ENCODE measurements at regions of chr22 and their contacts with region 1.

Region 1: DNA sequence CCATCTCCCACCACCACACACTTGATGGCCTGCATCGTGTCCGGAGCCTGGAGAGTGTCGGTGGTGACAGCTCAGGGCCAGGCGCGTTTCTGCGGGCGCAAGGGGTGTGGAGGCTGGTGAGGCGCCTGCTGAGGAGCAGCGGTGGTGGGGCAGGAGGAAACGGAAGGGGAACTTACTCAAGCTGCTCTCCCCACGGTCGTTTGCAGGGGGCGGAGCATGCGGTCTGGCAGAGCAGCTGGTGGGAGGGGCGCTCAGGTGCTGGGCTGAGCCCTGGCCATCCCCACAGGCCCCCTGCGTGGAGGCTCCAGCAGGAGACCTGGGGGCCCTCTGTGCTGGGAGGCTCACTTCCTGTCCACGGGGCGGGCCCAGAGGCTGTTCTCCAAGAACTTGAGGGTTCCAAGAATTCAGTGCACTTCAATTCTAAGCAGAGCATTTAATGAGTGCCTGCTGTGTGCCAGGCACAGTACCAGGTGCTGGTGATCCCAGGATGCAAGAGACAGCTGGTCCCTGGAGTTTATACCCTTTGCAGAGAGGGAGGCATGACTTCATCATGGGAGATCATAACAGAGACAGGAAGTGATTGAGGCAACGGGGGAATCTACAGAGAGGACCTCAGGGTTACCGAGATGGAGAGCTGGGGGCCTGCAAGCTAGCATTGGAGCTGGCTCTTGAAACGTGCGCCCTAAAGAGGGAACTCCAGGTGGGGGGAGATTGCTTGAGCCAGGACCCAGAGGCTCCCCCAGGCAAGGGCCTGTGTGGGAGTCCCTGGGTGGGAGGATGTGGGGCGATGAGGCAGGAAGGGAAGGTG is at the start of gene RAC2:
- DNase-seq: peak; percentile 83
- H3K4me3 Mint-ChIP-seq: peak within 1 kb of the TSS; percentile 99
- H3K27ac Mint-ChIP-seq: peak within 1 kb of the TSS; percentile 99
- H3K4me1 Mint-ChIP-seq: peaks cover 46% of the 10 kb centered on the region
- H3K27me3 Mint-ChIP-seq: no peaks in the 10 kb centered on the region
- total RNA-seq, gene RAC2: 592 and 614 TPM in 2 replicates

Region 2: GRCh38 chr22:36977947-36978660 is 266.2 kb before region 1 on chr22:
- intact Hi-C with region 1: loop called (anchors 1 kb)
- DNase-seq: peak; percentile 84
- H3K4me3 Mint-ChIP-seq: peak overlapping the region; percentile 86
- H3K27ac Mint-ChIP-seq: peak overlapping the region; percentile 74
- H3K4me1 Mint-ChIP-seq: peaks cover 15% of the 10 kb centered on the region
- H3K27me3 Mint-ChIP-seq: peaks cover 8% of the 10 kb centered on the region

Region 3: DNA sequence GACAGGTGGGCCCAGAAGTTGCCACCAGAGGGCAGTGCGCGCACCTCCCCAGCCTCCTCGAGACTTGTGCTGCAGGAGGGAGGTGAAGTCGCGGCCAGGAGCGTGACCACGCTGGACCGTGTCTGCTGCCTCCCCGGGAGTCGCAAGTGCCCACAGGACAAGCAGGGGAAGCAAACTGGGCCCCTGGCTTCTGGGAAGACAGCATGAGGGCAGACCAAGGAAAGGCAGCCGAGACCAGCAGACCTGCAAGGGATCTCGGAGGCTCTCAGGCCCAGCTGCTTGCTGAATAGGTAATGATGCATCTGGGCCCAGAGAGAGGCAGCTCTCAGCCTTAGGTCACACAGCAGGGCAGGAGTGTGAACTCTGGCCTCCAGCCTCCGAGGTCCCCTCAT is 77.6 kb before region 1 on chr22:
- intact Hi-C with region 1: loop called (anchors 1 kb)
- DNase-seq: peak; percentile 72
- H3K4me3 Mint-ChIP-seq: peak overlapping the region; percentile 75
- H3K27ac Mint-ChIP-seq: peak overlapping the region; percentile 69
- H3K4me1 Mint-ChIP-seq: peaks cover 78% of the 10 kb centered on the region
- H3K27me3 Mint-ChIP-seq: peaks cover 4% of the 10 kb centered on the region

Region 4: GRCh38 chr22:37218771-37219411 is 25.4 kb before region 1 on chr22:
- intact Hi-C with region 1: loop called (anchors 1 kb)
- DNase-seq: peak; percentile 72
- H3K4me3 Mint-ChIP-seq: peak overlapping the region; percentile 79
- H3K27ac Mint-ChIP-seq: peak overlapping the region; percentile 96
- H3K4me1 Mint-ChIP-seq: peaks cover 68% of the 10 kb centered on the region
- H3K27me3 Mint-ChIP-seq: no peaks in the 10 kb centered on the region

Region 5: DNA sequence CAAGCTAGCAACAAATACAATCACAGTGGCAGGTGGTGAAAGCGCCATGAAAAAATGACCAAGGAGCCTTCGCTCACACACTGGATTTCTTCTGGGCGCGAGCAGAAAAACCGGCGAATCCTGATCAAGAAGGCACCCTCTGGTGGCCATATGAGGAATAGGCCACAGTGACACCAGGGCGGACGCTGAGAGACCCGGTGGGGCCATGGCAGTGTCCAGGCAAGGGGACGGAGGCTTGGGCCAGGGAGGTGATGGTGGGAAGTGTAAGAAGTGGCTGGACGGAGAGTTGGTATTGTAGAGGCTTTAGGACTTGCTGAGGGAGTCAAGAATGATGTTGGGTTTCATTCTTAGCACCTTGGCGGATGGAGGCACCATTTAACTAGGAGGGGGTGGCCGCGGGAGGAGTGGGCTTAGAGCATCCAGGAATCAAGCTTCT is 16.6 kb after region 1 on chr22:
- intact Hi-C with region 1: loop called (anchors 1 kb)
- DNase-seq: peak; percentile 55
- H3K4me3 Mint-ChIP-seq: no peak overlapping the region
- H3K27ac Mint-ChIP-seq: no peak overlapping the region
- H3K4me1 Mint-ChIP-seq: peaks cover 26% of the 10 kb centered on the region
- H3K27me3 Mint-ChIP-seq: peaks cover 8% of the 10 kb centered on the region

Region 6: GRCh38 chr22:37282385-37282677 is 38.0 kb after region 1 on chr22 and contains the start of gene CYTH4:
- intact Hi-C with region 1: loop called (anchors 1 kb)
- DNase-seq: peak; percentile 74
- H3K4me3 Mint-ChIP-seq: peak within 1 kb of the TSS; percentile 88
- H3K27ac Mint-ChIP-seq: peak within 1 kb of the TSS; percentile 99
- H3K4me1 Mint-ChIP-seq: peaks cover 65% of the 10 kb centered on the region
- H3K27me3 Mint-ChIP-seq: no peaks in the 10 kb centered on the region
- total RNA-seq, gene CYTH4: 49.5 and 57.1 TPM in 2 replicates

Region 7: DNA sequence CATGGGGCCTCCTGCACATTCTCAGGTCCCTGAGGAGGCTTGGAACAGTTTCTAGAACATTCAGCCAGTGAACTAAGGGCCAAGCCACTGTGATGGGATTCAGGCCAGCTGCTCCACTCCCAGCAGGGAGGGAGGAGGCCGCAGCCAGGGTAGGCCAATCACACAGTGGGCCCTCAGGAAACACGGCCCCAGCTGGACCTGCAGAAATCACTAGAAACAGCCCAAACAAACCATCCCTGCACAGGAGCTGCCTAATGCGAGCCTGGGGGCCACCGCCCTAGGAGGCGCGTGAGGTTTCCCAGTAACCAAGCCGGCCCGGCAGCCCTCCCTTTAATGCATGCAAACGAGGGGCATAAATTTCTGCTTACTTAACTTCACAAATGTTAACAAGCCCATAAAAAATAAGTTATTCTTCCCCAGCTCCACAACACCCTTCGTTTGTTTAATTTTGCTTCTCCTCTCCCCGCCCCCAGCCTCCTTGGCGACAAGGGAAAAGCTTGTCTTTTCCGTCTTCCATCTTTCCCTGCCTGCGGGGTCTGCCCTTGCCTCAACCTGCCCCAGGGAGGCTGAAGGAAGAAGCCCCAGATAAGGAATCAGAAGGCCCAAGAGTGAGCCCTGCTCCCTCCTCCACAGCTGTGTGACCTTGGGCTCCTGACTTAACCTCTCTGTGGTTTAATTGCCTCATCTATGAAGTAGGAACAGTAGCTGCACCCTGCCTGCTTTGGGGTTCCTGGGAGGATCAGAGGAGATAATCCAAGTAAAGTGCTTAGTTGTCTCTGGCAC is 157.3 kb after region 1 on chr22:
- intact Hi-C with region 1: no loop called
- DNase-seq: no peak
- H3K4me3 Mint-ChIP-seq: no peak overlapping the region
- H3K27ac Mint-ChIP-seq: no peak overlapping the region
- H3K4me1 Mint-ChIP-seq: no peaks in the 10 kb centered on the region
- H3K27me3 Mint-ChIP-seq: peaks cover 4% of the 10 kb centered on the region

Measured in activated T-helper 1 cell treated with anti-CD3 and anti-CD28 coated beads, Interleukin-12 subunit alpha, Interleukin-12 subunit beta, Interleukin-2, Interleukin-4 antibody, amounts not matched to agents 30 ng/mL and 10 ng/mL and 1 ng/mL, durations not matched to agents 14 hours and 24 hours and 36 hours (primary cell).